Caco-2 (cell line): ENCODE measurements at regions of chr20 and their contacts with region 1.

Region 1: DNA sequence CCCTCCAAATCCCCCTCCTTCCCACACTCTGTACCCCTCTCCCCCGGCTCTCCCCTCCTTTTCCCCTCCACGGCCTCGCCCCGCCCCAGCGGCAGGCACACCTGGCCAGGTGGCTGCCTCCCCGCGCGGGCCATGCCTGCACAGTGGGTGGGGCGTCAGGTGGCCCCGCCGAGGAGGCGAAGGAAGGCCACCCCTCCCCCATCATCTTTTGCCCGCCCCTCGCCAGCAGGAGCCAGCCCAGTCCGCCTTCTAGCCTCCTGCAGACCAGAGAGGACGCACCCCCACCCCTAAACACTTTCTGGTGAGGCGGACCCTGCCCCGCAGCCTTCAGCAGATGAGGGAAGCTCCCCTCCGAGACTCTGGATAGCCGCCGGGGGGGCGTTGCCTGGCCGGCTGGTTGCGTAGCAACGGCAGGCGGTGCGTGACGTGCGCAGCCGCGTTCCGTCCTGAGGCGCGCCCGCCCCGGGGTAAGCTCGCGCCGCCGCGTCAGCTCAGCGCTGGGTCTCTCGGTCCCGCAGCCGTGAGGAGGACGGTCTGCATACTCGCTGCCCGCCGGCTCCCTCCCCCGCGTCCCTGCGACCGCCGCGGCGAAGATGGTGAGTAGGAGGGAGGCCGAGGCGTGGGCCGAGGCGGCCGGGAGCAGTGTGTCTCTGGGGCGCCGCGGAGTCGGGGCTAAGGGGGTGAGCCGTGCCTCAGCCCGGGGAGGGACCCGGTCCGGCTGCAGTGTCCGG is at the start of gene DSTN:
- DNase-seq: peak; percentile 99 to 100
- H3K4me3 ChIP-seq: peak within 1 kb of the TSS; percentile 98
- H3K4me3 Mint-ChIP-seq: peak within 1 kb of the TSS; percentile 73
- H3K27ac Mint-ChIP-seq: peak within 1 kb of the TSS; percentile 87
- H3K4me1 ChIP-seq: peaks cover 23% of the 10 kb centered on the region
- H3K4me1 Mint-ChIP-seq: peaks cover 32% of the 10 kb centered on the region
- H3K27me3 ChIP-seq: no peaks in the 10 kb centered on the region
- H3K27me3 Mint-ChIP-seq: no peaks in the 10 kb centered on the region
- CTCF ChIP-seq: no peak
- total RNA-seq, gene DSTN: 313 and 318 TPM in 2 replicates

Region 2: GRCh38 chr20:17545127-17545526 is 24.7 kb before region 1 on chr20:
- CTCF ChIA-PET with region 1: interaction called, 5 read pairs
- POLR2A ChIA-PET with region 1: interaction called, 3 read pairs
- intact Hi-C with region 1: loop called (anchors 1 kb)
- DNase-seq: no peak
- H3K4me3 ChIP-seq: no peak overlapping the region
- H3K4me3 Mint-ChIP-seq: no peak overlapping the region
- H3K27ac Mint-ChIP-seq: peak overlapping the region; percentile 48
- H3K4me1 ChIP-seq: peaks cover 11% of the 10 kb centered on the region; the same call in 1 of the 2 replicates
- H3K4me1 Mint-ChIP-seq: peaks cover 17% of the 10 kb centered on the region
- H3K27me3 ChIP-seq: no peaks in the 10 kb centered on the region
- H3K27me3 Mint-ChIP-seq: no peaks in the 10 kb centered on the region
- CTCF ChIP-seq: no peak

Region 3: DNA sequence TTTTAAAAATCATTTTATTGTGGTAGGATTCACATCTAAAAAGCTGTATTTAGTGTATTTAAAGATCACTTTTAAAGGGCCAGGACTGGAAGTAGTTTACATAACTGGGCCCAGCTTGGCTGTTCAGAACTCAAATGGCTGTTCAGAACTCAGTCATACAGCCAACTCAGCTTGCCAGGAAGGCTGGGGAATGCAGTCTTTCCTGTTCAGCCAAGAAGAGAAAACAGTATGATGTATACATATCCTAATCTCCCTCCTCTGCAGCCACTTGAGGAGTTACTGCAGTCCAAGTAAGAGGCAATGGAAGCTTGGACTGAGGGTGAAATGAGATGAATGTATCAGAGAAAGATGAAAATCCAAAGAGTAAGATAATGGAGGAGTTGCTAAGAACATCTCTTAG is 24.7 kb after region 1 on chr20:
- CTCF ChIA-PET with region 1: interaction called, 13 read pairs
- POLR2A ChIA-PET with region 1: interaction called, 30 read pairs
- intact Hi-C with region 1: loop called (anchors 1 kb)
- DNase-seq: peak; percentile 84 to 88
- H3K4me3 ChIP-seq: no peak overlapping the region
- H3K4me3 Mint-ChIP-seq: peak overlapping the region; percentile 46
- H3K27ac Mint-ChIP-seq: peak overlapping the region; percentile 46
- H3K4me1 ChIP-seq: peaks cover 43% of the 10 kb centered on the region
- H3K4me1 Mint-ChIP-seq: peaks cover 43% of the 10 kb centered on the region
- H3K27me3 ChIP-seq: no peaks in the 10 kb centered on the region
- H3K27me3 Mint-ChIP-seq: no peaks in the 10 kb centered on the region
- CTCF ChIP-seq: no peak

Region 4: DNA sequence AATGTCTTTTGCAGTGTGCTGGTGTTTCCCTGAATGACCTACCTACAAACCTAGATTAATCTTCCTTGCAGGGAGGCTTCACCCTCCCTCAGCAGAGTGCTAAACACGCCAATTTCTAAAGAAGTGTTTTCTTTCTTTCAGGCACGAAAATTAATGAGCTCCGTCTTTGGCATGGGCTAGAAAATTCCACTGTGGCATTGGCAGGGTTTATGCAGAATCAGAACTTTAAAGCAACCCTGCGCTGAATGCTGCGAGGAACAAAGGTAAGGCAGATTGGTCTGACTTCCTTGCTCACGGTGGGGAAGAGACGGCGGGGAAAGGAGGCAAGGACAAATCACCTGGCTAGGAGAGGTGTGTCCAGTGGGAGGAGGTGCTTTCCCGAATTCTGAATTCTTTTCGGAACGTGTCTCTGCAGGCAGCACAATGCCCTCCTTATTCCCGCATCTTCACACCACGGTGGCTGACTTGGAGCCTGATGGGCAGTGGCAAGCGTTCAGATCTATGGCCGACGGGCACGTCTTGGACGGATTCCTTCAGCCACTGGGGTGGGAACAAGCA is 123.7 kb after region 1 on chr20:
- CTCF ChIA-PET with region 1: no interaction called
- POLR2A ChIA-PET with region 1: no interaction called
- intact Hi-C with region 1: no loop called
- DNase-seq: peak in 1 of 2 experiments; percentile 26
- H3K4me3 ChIP-seq: no peak overlapping the region
- H3K4me3 Mint-ChIP-seq: no peak overlapping the region
- H3K27ac Mint-ChIP-seq: no peak overlapping the region
- H3K4me1 ChIP-seq: peaks cover 22% of the 10 kb centered on the region
- H3K4me1 Mint-ChIP-seq: peaks cover 11% of the 10 kb centered on the region
- H3K27me3 ChIP-seq: no peaks in the 10 kb centered on the region
- H3K27me3 Mint-ChIP-seq: no peaks in the 10 kb centered on the region
- CTCF ChIP-seq: no peak

Region 5: GRCh38 chr20:17773619-17774018 is 203.8 kb after region 1 on chr20:
- CTCF ChIA-PET with region 1: no interaction called
- POLR2A ChIA-PET with region 1: interaction called, 11 read pairs
- intact Hi-C with region 1: no loop called
- DNase-seq: no peak
- H3K4me3 ChIP-seq: no peak overlapping the region
- H3K4me3 Mint-ChIP-seq: no peak overlapping the region
- H3K27ac Mint-ChIP-seq: no peak overlapping the region
- H3K4me1 ChIP-seq: peaks cover 17% of the 10 kb centered on the region
- H3K4me1 Mint-ChIP-seq: peaks cover 18% of the 10 kb centered on the region
- H3K27me3 ChIP-seq: no peaks in the 10 kb centered on the region
- H3K27me3 Mint-ChIP-seq: no peaks in the 10 kb centered on the region
- CTCF ChIP-seq: no peak

Region 6: GRCh38 chr20:17786221-17786718 is 216.5 kb after region 1 on chr20:
- CTCF ChIA-PET with region 1: no interaction called
- POLR2A ChIA-PET with region 1: no interaction called
- intact Hi-C with region 1: no loop called
- DNase-seq: no peak
- H3K4me3 ChIP-seq: no peak overlapping the region
- H3K4me3 Mint-ChIP-seq: no peak overlapping the region
- H3K27ac Mint-ChIP-seq: no peak overlapping the region
- H3K4me1 ChIP-seq: 0 out of 2 replicates have a peak, but pooled peaks cover 6% of the 10 kb centered on the region
- H3K4me1 Mint-ChIP-seq: no peaks in the 10 kb centered on the region
- H3K27me3 ChIP-seq: no peaks in the 10 kb centered on the region
- H3K27me3 Mint-ChIP-seq: no peaks in the 10 kb centered on the region
- CTCF ChIP-seq: no peak